CD8-positive, alpha-beta T cell (primary cell): ENCODE measurements at regions of chr2 and their contacts with region 1.

Region 1: DNA sequence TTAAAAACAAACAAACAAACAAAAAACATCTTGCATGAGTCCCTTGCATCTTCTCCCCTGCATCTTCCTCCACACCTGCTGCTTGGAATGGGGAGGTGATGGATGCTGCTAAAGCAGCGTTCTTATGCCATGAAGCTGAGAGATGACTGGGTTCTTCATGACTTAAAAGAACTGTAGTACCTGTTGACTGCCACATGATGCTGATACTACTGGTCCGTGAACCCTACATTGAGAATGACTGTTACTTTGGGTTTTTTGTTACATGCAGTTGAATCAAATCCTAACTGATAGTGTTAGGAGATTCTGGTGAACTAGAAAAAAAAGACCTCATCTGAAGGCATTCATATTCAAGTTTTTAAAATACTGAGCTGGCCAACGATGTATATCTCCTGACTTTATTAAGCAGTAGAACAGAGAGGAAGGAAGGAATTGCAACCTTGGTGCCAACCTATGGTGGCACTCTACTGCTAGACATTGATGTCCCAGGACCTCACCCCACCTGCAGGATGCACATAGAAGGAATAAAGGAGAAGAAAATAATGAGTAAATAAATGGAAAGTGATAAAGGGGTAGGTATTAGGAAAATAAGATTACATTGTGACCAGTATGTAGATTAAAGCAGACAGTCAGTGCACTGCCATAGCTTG is 63.2 kb upstream of the SPAG16 start:
- DNase-seq: no peak
- ATAC-seq: no peak
- H3K4me3 ChIP-seq: no peak overlapping the region
- H3K4me3 Mint-ChIP-seq: no peak overlapping the region
- H3K27ac ChIP-seq: no peak overlapping the region
- H3K27ac Mint-ChIP-seq: no peak overlapping the region
- H3K4me1 ChIP-seq: no peaks in the 10 kb centered on the region
- H3K4me1 Mint-ChIP-seq: peaks cover 5% of the 10 kb centered on the region
- H3K27me3 ChIP-seq: no peaks in the 10 kb centered on the region
- H3K27me3 Mint-ChIP-seq: no peaks in the 10 kb centered on the region
- CTCF ChIP-seq: no peak

Region 2: DNA sequence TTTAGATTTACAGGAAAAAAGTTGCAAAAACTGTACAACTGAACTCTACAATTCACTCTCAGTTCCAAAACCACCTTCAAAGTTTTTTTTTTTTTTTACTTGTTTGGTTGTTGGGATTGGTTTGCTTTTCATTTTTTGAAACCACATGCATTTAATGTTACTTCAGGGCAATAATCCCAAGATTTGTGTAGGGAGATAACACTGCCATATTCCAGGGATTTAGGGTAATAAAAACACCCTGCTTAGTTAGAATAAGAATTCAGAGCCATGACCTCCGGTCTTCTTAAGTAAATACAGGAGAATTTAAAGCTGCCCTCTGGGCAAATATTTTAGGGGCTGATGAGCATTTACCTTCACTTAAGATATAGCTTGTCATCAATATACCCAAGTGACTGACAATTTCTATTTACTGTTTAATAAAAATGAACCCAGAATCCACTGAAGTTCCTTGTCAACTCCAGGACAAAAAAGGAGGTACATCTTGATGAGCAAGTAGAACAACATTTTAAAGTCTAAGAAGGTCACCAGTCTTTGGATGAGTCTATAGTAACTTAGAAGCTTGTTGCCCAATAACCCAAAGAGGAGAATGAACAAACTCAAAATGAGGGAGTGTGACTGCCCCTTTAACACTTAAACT is 45.4 kb before region 1 on chr2:
- CTCF ChIA-PET with region 1: no interaction called
- POLR2A ChIA-PET with region 1: no interaction called
- intact Hi-C with region 1: loop called in 1 of 2 experiments (anchors 5 kb)
- DNase-seq: no peak
- ATAC-seq: no peak
- H3K4me3 ChIP-seq: no peak overlapping the region
- H3K4me3 Mint-ChIP-seq: no peak overlapping the region
- H3K27ac ChIP-seq: no peak overlapping the region
- H3K27ac Mint-ChIP-seq: no peak overlapping the region
- H3K4me1 ChIP-seq: no peaks in the 10 kb centered on the region
- H3K4me1 Mint-ChIP-seq: no peaks in the 10 kb centered on the region
- H3K27me3 ChIP-seq: no peaks in the 10 kb centered on the region
- H3K27me3 Mint-ChIP-seq: no peaks in the 10 kb centered on the region
- CTCF ChIP-seq: no peak